ENCODE measurements at regions of chr21 and their contacts with region 1.

Region 1: DNA sequence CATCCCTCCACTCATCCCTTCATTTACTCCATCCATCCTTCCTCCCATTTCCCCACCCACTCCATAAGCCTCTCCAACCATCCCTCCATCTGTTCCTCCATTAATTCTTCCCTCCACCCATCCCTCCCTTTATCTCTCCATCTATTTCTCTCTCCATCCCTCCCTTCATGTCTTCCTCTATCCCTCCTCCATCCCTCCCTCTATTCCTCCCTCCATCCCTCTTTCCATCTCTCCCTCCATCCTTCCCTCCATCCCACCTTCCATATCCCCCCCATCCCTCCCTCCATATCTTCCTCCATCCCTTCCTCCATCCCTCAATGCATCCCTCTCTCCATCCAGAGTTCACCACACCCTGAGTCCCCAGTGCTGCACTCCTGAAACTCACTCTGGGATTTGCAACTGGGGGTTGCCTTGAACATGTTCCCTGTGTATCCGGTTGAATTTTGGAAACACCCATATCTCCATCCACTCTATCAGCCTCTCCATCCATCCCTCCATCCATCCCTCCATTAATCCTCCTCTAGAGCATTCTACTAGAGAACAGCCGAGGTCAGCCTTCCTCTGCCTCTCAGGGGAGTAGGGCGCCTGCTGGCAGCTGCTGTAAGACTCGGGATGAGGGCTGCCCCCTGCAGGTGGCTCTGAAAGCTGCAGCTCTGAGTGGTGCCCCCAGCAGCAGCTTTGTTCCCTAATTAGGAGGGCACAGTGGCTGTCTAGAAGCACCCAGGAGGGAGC is 39.4 kb downstream of the ABCG1 start:
- DNase-seq: peak; percentile 84
- H3K4me3 Mint-ChIP-seq: no peak overlapping the region
- H3K27ac Mint-ChIP-seq: no peak overlapping the region
- H3K4me1 Mint-ChIP-seq: peaks cover 19% of the 10 kb centered on the region
- H3K27me3 Mint-ChIP-seq: no peaks in the 10 kb centered on the region

Region 2: DNA sequence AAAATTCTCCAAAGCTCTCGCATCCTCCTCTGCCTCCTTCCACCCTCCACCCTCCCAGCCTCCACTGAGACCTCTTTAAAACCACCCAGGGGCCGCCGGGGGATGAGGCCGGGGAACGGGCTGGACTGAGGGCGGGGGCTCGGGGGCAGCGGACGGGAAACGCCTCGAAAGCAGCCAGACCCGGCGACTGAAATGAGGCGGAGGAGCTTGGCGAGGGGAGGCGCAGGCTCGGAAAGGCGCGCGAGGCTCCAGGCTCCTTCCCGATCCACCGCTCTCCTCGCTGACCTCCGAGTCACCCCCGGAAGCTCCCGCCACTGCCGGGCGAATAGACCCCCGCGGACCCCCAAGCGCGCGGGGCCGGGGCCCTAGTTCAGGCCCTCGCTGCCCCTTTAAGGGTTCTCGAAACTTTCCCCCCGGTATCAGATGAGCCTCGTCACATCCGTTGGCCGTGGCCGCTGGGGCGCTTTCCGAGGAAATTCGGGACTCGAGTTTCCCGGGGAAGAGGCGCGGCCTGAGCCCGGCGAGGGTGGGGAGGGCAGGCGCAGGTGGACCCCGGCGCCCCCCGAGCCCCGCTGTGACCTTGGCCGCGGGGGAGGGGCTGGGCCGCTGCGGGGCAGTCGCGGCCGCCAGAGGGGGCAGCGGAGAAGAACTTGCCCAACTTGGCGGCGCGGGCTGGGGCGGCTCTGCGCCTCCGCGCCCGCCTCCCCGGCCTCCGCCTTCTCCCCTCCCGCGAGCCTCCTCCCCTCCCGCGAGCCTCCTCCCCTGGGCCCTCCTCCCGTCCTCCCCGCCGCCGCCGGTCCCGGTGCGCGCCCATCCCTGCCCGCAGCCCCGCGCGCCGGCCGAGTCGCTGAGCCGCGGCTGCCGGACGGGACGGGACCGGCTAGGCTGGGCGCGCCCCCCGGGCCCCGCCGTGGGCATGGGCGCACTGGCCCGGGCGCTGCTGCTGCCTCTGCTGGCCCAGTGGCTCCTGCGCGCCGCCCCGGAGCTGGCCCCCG is 1090.7 kb before region 1 on chr21 and contains the start of gene BACE2:
- CTCF ChIA-PET with region 1: no interaction called
- POLR2A ChIA-PET with region 1: no interaction called
- DNase-seq: peak; percentile 68
- H3K4me3 Mint-ChIP-seq: peak within 1 kb of the TSS; percentile 59
- H3K27ac Mint-ChIP-seq: no peak within 1 kb of the TSS
- H3K4me1 Mint-ChIP-seq: peaks cover 7% of the 10 kb centered on the region
- H3K27me3 Mint-ChIP-seq: peaks cover 52% of the 10 kb centered on the region
- total RNA-seq, gene BACE2: 1.6 to 1.7 TPM

Region 3: DNA sequence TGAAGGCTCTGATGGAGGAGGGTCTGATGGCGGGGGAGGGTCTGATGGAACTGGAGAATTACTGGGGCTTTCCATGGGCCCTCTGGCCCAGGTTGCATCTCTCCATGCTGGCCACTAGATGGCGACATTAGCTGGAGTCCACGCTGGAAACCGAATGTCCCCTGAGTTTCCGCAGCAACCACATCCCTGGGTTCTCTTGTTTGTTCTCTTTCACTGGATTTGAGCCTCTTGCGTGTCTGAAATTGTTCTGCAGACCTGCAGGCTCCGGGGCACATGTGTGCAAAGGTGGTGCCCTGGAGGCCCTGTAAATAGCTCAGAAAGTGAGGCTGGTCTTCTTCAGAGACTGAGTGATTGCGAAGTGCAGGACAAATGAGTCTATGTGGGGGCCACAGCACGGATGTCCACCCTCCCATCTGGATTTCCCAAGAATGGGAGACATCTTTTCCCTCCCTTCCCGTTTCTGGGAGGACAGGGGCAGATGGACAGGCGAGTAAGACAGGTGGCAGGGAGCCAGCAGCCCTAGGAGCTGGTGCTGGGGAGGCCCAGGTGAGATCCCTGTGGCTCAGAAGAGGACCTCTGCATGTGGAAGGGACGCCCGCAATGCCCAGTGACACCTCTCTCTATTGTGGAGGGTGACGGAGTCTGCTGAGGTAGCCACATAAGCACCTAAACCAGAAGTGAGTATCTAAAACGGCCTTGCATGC is 112.6 kb before region 1 on chr21:
- CTCF ChIA-PET with region 1: interaction called, 52 read pairs
- POLR2A ChIA-PET with region 1: interaction called, 3 read pairs
- DNase-seq: peak; percentile 76
- H3K4me3 Mint-ChIP-seq: no peak overlapping the region
- H3K27ac Mint-ChIP-seq: peak overlapping the region; percentile 36
- H3K4me1 Mint-ChIP-seq: peaks cover 8% of the 10 kb centered on the region
- H3K27me3 Mint-ChIP-seq: no peaks in the 10 kb centered on the region

Region 4: GRCh38 chr21:42151091-42151947 is 107.0 kb before region 1 on chr21:
- CTCF ChIA-PET with region 1: interaction called, 52 read pairs
- POLR2A ChIA-PET with region 1: no interaction called
- DNase-seq: no peak
- H3K4me3 Mint-ChIP-seq: no peak overlapping the region
- H3K27ac Mint-ChIP-seq: no peak overlapping the region
- H3K4me1 Mint-ChIP-seq: no peaks in the 10 kb centered on the region
- H3K27me3 Mint-ChIP-seq: no peaks in the 10 kb centered on the region

Region 5: DNA sequence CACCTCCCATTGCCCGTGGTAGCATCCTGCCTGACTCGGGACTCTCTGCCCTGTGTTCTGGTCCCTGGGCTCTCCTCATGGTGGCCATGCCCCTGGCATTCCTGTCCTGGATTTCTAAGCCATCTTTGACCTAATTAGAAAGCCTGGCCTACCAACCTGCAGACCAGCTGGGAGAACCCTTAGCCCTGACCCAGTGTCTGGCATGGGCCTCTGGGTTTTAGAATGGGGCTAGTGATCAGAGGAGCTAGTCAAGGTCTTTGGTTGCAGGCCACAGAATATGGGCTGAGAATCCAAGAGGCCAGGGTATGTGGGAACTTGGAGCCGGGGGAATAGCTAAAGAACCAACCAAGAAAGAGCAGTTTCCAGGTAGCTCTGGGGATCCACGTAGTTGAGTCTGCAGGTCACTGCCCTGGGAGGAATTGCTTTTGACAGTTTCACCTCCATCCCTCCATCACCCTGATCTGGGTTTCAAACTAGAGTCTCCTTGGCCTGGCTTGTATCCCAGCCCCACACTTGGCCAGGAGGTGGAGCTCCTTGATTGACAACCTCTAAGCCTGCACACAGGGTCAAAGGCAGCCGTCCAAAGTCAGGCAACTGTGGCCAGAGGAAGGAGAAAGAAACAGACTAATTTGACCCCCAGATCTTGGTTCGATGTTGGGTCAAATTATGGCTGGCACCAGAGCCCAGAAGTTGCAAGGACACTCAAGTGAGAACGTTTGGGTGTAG is 94.1 kb before region 1 on chr21:
- CTCF ChIA-PET with region 1: interaction called, 17 read pairs
- POLR2A ChIA-PET with region 1: no interaction called
- DNase-seq: peak; percentile 67
- H3K4me3 Mint-ChIP-seq: no peak overlapping the region
- H3K27ac Mint-ChIP-seq: no peak overlapping the region
- H3K4me1 Mint-ChIP-seq: peaks cover 38% of the 10 kb centered on the region
- H3K27me3 Mint-ChIP-seq: no peaks in the 10 kb centered on the region

Measured in activated CD4-positive, alpha-beta T cell treated with anti-CD3 and anti-CD28 coated beads, Interleukin-2, amount 10 ng/mL, durations not matched to agents 7 days and 5 days (primary cell).